CD14-positive monocyte (primary cell): ENCODE measurements at regions of chr7 and their contacts with region 1.

Region 1: DNA sequence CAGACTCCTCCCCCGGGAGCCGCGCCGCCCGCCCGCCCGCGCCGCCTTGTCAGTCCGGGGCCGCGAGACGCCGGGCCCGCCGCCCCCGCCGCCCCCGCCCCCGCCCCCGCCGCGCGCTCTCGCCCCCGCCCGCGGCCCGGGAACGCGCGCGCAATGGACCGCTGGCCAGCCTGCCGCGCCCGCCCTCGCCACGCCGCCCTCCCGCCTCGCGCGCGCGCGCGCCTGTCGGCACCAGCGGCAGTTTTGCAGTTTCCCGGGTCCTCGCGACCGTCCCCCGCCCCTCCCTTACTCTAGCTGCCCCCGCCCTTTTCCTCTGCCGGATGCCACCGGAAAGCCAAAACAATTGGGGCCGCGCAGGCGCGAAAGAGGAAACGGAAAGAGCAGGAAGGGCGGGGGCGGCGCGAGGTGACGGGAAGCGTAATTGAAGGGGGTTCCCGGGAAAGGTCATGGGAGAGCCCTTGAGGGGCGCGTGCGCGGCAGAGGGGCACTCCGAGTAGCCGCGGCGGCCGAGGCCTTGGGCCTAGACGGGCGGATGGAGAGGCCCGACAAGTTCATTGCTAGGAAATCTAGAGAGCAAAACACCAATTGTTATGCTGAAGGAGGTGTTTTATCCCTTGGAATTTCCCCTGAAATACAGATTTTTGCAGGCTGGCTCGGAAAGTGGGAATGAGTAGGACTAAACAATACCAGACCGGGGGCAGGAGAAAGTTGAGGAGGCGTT is 400 bp upstream of the KBTBD2 start:
- DNase-seq: peak; percentile 96 to 99 (median 97)
- H3K4me3 ChIP-seq: peak overlapping the region; percentile 80 to 98 (median 91)
- H3K4me3 Mint-ChIP-seq: peak overlapping the region; percentile 84 to 94
- H3K27ac ChIP-seq: peak overlapping the region; percentile 98
- H3K27ac Mint-ChIP-seq: peak overlapping the region; percentile 97 to 99 (median 98)
- H3K4me1 ChIP-seq: peaks cover 21 to 38% of the 10 kb centered on the region in 2 donors
- H3K4me1 Mint-ChIP-seq: peaks cover 41% of the 10 kb centered on the region
- H3K27me3 ChIP-seq: no peaks in the 10 kb centered on the region
- H3K27me3 Mint-ChIP-seq: peaks cover 0 to 5% (median 0%) of the 10 kb centered on the region in 3 donors
- CTCF ChIP-seq: no peak

Region 2: GRCh38 chr7:32490127-32490822 is 401.7 kb before region 1 on chr7 and contains the start of gene LSM5:
- intact Hi-C with region 1: loop called (anchors 5 to 10 kb)
- DNase-seq: peak; percentile 90 to 92 (median 90)
- H3K4me3 ChIP-seq: peak within 1 kb of the TSS; percentile 56 to 89 (median 82)
- H3K4me3 Mint-ChIP-seq: peak within 1 kb of the TSS; percentile 87 to 93
- H3K27ac ChIP-seq: peak within 1 kb of the TSS; percentile 66 to 92
- H3K27ac Mint-ChIP-seq: peak within 1 kb of the TSS; percentile 87 to 97 (median 94)
- H3K4me1 ChIP-seq: peaks cover 8 to 18% of the 10 kb centered on the region in 2 donors
- H3K4me1 Mint-ChIP-seq: peaks cover 22% of the 10 kb centered on the region
- H3K27me3 ChIP-seq: no peaks in the 10 kb centered on the region
- H3K27me3 Mint-ChIP-seq: peaks cover 0 to 4% (median 3%) of the 10 kb centered on the region in 3 donors
- CTCF ChIP-seq: no peak
- polyA plus RNA-seq, gene LSM5: 16.4 to 81.1 (median 78.2) TPM

Region 3: DNA sequence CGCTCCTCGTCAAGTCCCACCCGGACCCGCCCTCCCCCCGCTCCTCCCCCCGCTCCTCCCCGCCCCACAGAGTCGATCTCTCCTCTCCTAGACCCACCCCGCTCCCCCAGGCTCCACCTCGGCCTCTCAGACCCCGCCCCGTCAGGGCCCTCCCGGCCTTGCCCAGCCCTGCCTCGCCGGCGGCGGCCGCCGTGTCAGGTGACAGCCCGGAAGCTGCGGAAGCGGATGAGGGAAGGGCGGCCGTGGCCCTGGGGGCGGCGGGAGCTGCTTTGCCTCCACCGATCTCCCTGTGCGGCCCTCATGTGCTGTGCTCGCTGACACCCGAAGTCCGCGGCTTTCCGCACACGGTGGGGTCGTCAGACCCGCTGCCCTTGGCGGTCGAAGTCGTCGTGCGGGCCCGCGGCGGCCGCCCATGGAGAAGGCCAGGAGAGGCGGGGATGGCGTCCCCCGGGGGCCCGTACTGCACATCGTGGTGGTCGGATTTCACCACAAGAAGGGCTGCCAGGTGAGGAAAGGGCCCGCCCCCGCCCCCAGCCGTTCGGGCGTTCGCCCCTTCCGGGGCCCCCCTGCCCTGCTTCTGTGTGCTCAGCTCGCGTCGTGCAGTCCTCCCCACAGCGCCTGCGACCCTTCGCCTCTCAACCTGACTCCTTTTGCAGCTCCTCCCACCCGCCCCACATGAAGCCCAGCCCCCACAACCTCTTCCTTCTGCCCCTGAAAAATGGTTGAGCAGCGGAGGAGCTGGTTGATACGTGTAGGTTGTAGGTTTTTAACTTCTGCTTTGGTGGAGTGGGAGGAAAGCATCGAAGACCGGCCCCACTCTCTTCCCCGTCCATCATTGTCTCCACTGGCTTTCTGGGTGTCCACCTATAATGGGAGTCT is 396.4 kb before region 1 on chr7 and contains the start of gene AVL9:
- intact Hi-C with region 1: loop called (anchors 5 to 10 kb)
- DNase-seq: peak; percentile 89 to 96 (median 92)
- H3K4me3 ChIP-seq: peak within 1 kb of the TSS; percentile 76 to 94 (median 77)
- H3K4me3 Mint-ChIP-seq: peak within 1 kb of the TSS; percentile 90 to 94
- H3K27ac ChIP-seq: peak within 1 kb of the TSS; percentile 90 to 99
- H3K27ac Mint-ChIP-seq: peak within 1 kb of the TSS; percentile 94 to 99 (median 96)
- H3K4me1 ChIP-seq: peaks cover 13 to 25% of the 10 kb centered on the region in 2 donors
- H3K4me1 Mint-ChIP-seq: peaks cover 37% of the 10 kb centered on the region
- H3K27me3 ChIP-seq: no peaks in the 10 kb centered on the region
- H3K27me3 Mint-ChIP-seq: peaks cover 0 to 5% (median 3%) of the 10 kb centered on the region in 3 donors
- CTCF ChIP-seq: no peak
- polyA plus RNA-seq, gene AVL9: 16.3 to 17.1 (median 16.8) TPM

Region 4: GRCh38 chr7:32957326-32958045 is 65.5 kb after region 1 on chr7 and contains the start of gene FKBP9:
- intact Hi-C with region 1: no loop called
- DNase-seq: peak; percentile 12 to 32 (median 28)
- H3K4me3 ChIP-seq: peak within 1 kb of the TSS; percentile 59 to 94 (median 63)
- H3K4me3 Mint-ChIP-seq: peak within 1 kb of the TSS; percentile 78 to 88
- H3K27ac ChIP-seq: peak within 1 kb of the TSS in 1 of 2 donors; percentile 28
- H3K27ac Mint-ChIP-seq: peak within 1 kb of the TSS in 2 of 7 donors; percentile 25 to 38
- H3K4me1 ChIP-seq: peaks cover 12% of the 10 kb centered on the region in 2 donors
- H3K4me1 Mint-ChIP-seq: peaks cover 14% of the 10 kb centered on the region
- H3K27me3 ChIP-seq: peaks cover 0 to 14% of the 10 kb centered on the region in 2 donors
- H3K27me3 Mint-ChIP-seq: peaks cover 15 to 24% (median 21%) of the 10 kb centered on the region in 3 donors
- CTCF ChIP-seq: no peak
- polyA plus RNA-seq, gene FKBP9: 2.9 to 5.6 (median 4.2) TPM

Region 5: GRCh38 chr7:33062782-33063443 is 171.0 kb after region 1 on chr7:
- intact Hi-C with region 1: loop called (anchors 5 kb)
- DNase-seq: peak; percentile 87 to 95 (median 89)
- H3K4me3 ChIP-seq: peak overlapping the region; percentile 63 to 89 (median 80)
- H3K4me3 Mint-ChIP-seq: peak overlapping the region; percentile 88 to 92
- H3K27ac ChIP-seq: peak overlapping the region; percentile 81 to 90
- H3K27ac Mint-ChIP-seq: peak overlapping the region; percentile 84 to 94 (median 93)
- H3K4me1 ChIP-seq: peaks cover 25 to 37% of the 10 kb centered on the region in 2 donors
- H3K4me1 Mint-ChIP-seq: peaks cover 34% of the 10 kb centered on the region
- H3K27me3 ChIP-seq: no peaks in the 10 kb centered on the region
- H3K27me3 Mint-ChIP-seq: peaks cover 0 to 1% (median 1%) of the 10 kb centered on the region in 3 donors
- CTCF ChIP-seq: no peak

Region 6: GRCh38 chr7:33128990-33129805 is 237.2 kb after region 1 on chr7 and contains the start of gene BBS9:
- intact Hi-C with region 1: loop called in 1 of 2 experiments (anchors 10 kb)
- DNase-seq: peak; percentile 89 to 92 (median 90)
- H3K4me3 ChIP-seq: peak within 1 kb of the TSS; percentile 60 to 80 (median 63)
- H3K4me3 Mint-ChIP-seq: peak within 1 kb of the TSS; percentile 86 to 94
- H3K27ac ChIP-seq: peak within 1 kb of the TSS; percentile 72 to 80
- H3K27ac Mint-ChIP-seq: peak within 1 kb of the TSS; percentile 77 to 93 (median 91)
- H3K4me1 ChIP-seq: peaks cover 12 to 16% of the 10 kb centered on the region in 2 donors
- H3K4me1 Mint-ChIP-seq: peaks cover 16% of the 10 kb centered on the region
- H3K27me3 ChIP-seq: no peaks in the 10 kb centered on the region
- H3K27me3 Mint-ChIP-seq: no peaks in the 10 kb centered on the region
- CTCF ChIP-seq: no peak
- polyA plus RNA-seq, gene BBS9: 4.9 to 7.5 (median 6.8) TPM

Region 7: DNA sequence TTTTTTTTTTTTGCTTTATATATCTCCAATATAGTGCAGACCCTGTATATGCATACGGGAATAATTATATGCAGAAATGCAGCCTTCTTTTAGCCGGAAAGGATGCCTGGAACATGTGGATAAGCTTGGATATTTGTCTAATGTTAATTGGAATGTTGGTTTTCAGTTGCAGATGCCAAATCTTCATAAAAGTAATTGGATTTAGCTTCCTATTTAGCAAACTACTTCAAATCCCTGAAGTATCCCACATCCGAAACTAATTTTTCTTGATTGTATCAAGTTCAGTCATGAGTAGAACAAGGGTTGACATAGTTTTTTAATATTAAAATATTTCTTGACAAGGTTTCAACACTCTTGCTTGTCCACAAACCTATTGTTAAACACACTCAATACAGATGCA is 519.1 kb after region 1 on chr7:
- intact Hi-C with region 1: no loop called
- DNase-seq: no peak
- H3K4me3 ChIP-seq: no peak overlapping the region
- H3K4me3 Mint-ChIP-seq: no peak overlapping the region
- H3K27ac ChIP-seq: no peak overlapping the region
- H3K27ac Mint-ChIP-seq: no peak overlapping the region
- H3K4me1 ChIP-seq: no peaks in the 10 kb centered on the region
- H3K4me1 Mint-ChIP-seq: no peaks in the 10 kb centered on the region
- H3K27me3 ChIP-seq: no peaks in the 10 kb centered on the region
- H3K27me3 Mint-ChIP-seq: peaks cover 0 to 3% (median 0%) of the 10 kb centered on the region in 3 donors
- CTCF ChIP-seq: no peak